ENCODE measurements at regions of chr6 and their contacts with region 1.

Region 1: GRCh38 chr6:30483677-30484279 is 5.5 kb upstream of the HLA-E start:
- DNase-seq: no peak
- H3K4me3 ChIP-seq: no peak overlapping the region
- H3K27ac ChIP-seq: no peak overlapping the region
- H3K4me1 ChIP-seq: peaks cover 5 to 20% (median 10%) of the 10 kb centered on the region in 4 donors
- H3K27me3 ChIP-seq: peaks cover 0 to 43% (median 22%) of the 10 kb centered on the region in 4 donors
- CTCF ChIP-seq: peak; percentile 45 to 62 (median 51)
- EP300 ChIP-seq: no peak
- POLR2A ChIP-seq: no peak

Region 2: DNA sequence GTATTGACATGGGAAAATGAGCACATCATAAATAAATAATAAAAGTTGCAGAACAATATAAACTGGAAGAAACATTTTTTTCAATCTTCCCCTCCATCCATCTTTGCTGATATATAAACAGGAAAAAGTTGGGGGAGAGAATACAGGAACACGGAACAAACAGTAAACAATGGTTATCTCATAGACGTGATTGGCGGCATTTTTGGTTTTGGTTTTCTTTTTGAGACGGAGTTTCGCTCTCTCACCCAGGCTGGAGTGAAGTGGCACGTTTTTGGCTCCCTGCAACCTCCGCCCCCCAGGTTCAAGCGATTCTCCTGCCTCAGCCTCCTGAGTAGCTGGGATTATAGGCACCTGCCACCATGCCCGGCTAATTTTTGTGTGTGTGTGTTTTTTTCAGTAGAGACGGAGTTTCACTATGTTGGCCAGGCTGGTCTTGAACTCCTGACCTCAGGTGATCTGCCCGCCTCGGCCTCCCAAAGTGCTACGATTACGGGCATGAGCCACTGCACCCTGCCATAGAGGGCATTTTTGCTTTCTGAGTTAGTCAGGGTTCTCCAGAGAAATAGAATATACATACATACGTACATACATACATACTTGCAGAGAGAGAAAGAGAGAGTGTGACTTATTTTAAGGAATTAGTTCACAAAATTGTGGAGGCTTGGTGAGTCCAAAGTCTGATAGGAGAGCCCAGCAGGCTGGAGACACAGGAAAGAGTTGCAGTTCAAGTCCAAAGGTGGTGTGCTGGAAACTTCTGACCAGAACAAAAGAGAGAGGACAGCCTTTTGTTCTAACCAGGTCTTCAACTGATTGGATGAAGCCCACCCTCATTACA is 49.9 kb after region 1 on chr6:
- intact Hi-C with region 1: loop called (anchors 2 kb)
- DNase-seq: no peak
- H3K4me3 ChIP-seq: no peak overlapping the region
- H3K27ac ChIP-seq: no peak overlapping the region
- H3K4me1 ChIP-seq: peaks cover 4 to 10% (median 8%) of the 10 kb centered on the region in 4 donors
- H3K27me3 ChIP-seq: no peaks in the 10 kb centered on the region
- CTCF ChIP-seq: no peak
- EP300 ChIP-seq: no peak
- POLR2A ChIP-seq: no peak

Region 3: GRCh38 chr6:30599625-30600324 is 116.0 kb after region 1 on chr6:
- intact Hi-C with region 1: loop called (anchors 5 kb)
- DNase-seq: no peak
- H3K4me3 ChIP-seq: no peak overlapping the region
- H3K27ac ChIP-seq: no peak overlapping the region
- H3K4me1 ChIP-seq: peaks cover 0 to 10% (median 2%) of the 10 kb centered on the region in 4 donors
- H3K27me3 ChIP-seq: no peaks in the 10 kb centered on the region
- CTCF ChIP-seq: no peak
- EP300 ChIP-seq: no peak
- POLR2A ChIP-seq: no peak

Region 4: GRCh38 chr6:30616811-30617564 is 133.2 kb after region 1 on chr6 and contains the start of gene PPP1R10:
- intact Hi-C with region 1: loop called (anchors 5 kb)
- DNase-seq: peak; percentile 100
- H3K4me3 ChIP-seq: peak within 1 kb of the TSS; percentile 68 to 91 (median 76)
- H3K27ac ChIP-seq: peak within 1 kb of the TSS; percentile 90 to 98 (median 96)
- H3K4me1 ChIP-seq: peaks cover 38 to 48% (median 44%) of the 10 kb centered on the region in 4 donors
- H3K27me3 ChIP-seq: no peaks in the 10 kb centered on the region
- CTCF ChIP-seq: no peak
- EP300 ChIP-seq: no peak
- POLR2A ChIP-seq: peak; percentile 99
- total RNA-seq, gene PPP1R10: 24.5 to 53.6 (median 37.9) TPM

Region 5: DNA sequence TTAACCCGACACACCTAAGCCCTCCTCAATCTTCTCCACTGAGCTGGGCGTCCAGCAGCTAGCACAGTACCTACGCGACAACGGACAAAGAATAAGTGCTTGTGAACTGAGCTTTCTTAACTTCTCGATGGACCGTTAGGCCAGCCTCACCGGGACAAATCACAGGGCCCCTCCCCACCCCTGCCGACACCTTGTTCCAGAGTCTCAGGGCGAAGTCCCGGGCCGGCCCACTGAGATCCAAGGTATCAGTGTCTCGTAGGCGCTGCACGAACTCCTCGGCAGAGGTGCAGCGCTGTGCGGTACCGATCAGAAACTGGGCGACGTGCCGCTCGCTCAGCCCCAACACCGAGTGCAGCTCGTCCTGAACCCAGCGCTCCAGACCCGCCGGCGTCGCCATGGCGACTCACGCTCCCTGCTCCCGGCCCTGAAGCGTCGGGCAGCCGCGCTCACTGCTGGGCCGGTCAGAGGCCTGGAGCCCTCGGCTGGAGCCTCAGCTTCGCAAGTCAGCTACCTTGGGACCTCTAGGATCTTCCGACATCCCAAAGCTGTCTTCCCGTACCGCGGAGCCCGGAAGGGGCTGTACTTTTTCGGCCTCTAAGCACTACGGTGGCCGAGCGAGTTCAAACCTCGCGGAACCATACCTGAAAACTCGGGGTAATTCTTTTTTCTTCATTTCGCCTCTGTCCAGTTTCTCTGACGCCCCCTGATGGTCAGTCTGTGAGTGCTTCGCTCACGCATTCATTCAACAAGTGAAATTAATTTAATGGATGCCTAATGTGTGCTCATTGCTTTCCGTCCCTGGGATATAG is 188.9 kb after region 1 on chr6 and contains the start of gene DHX16:
- intact Hi-C with region 1: loop called (anchors 5 kb)
- DNase-seq: peak; percentile 98
- H3K4me3 ChIP-seq: peak within 1 kb of the TSS; percentile 81 to 95 (median 94)
- H3K27ac ChIP-seq: peak within 1 kb of the TSS; percentile 80 to 93 (median 84)
- H3K4me1 ChIP-seq: peaks cover 16 to 32% (median 23%) of the 10 kb centered on the region in 4 donors
- H3K27me3 ChIP-seq: no peaks in the 10 kb centered on the region
- CTCF ChIP-seq: peak; percentile 86 to 96 (median 94)
- EP300 ChIP-seq: no peak
- POLR2A ChIP-seq: no peak
- total RNA-seq, gene DHX16: 20.3 to 41.1 (median 31.1) TPM

Measured in esophagus muscularis mucosa (tissue), 4 donors.